GM10248 (cell line): ENCODE measurements at regions of chr11 and their contacts with region 1.

Region 1: GRCh38 chr11:11798586-11799438 is 43.0 kb upstream of the USP47 start:
- DNase-seq: peak; percentile 64
- CTCF ChIP-seq: peak; percentile 87

Region 2: GRCh38 chr11:11813288-11813962 is 14.6 kb after region 1 on chr11:
- CTCF ChIA-PET with region 1: interaction called, 20 read pairs
- POLR2A ChIA-PET with region 1: no interaction called
- DNase-seq: no peak
- CTCF ChIP-seq: no peak

Region 3: GRCh38 chr11:11848891-11849746 is 50.3 kb after region 1 on chr11:
- CTCF ChIA-PET with region 1: interaction called, 14 read pairs
- POLR2A ChIA-PET with region 1: no interaction called
- DNase-seq: peak; percentile 38
- CTCF ChIP-seq: peak; percentile 67

Region 4: DNA sequence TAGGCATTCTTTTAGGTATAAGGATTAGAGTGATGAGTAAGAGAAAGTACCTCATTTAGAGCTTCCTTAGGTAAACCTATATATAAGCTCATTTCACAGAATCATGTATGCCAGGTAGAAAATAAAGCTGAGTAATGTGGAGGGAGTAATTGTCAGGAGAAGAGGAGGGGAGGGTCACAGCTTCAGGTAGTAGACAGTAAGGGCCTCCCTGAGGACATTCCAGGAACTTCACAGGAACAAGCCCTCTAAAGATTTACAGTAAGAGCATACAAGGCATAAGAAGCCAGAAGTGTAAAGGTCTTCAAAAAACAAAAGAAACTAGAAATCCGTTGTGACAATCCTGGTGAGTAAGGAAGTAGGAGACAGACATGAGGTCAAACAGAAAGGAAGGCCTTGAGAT is 100.6 kb after region 1 on chr11:
- CTCF ChIA-PET with region 1: no interaction called
- POLR2A ChIA-PET with region 1: no interaction called
- DNase-seq: no peak
- CTCF ChIP-seq: no peak

Region 5: DNA sequence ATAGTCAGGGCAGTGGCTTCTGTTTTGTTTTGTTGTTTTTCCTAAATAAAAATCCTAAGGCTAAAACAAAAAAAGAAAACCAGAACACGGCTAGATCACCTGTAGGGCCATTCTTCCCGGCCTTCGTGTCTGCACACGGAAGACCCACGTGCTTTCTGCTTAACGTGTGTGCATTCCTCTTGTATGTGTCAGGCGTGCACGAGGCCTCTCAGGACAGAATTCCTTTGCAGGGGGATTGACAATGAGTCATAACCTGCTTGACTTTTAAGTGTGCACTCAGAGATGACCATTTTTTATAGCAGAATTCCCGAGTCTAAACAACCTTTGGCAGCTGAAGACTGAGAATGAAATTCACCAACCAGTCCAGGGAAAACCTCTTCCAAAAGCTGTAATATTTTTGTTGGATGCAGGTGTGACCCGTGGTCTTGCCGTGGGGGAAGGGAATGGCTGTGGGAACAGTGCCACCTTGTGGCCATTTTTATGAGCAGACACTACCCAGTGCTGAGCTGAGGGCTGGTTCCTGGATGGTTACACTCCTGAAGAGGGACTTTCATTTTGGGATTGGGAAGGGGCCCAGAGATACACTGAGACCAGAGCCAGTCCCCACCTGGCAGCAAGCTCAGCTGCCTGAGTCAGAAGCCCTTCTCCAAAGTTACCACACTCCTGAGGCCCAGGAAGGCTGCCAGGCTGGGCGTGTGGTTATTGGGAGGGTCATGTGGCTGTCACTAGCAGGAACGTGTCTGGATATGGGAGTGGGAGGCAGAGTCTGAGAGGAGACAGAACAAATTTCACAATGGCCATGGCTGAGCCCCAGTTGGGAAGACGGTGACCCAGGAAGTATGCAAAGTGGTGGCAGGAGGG is 245.4 kb after region 1 on chr11:
- CTCF ChIA-PET with region 1: interaction called, 34 read pairs
- POLR2A ChIA-PET with region 1: no interaction called
- DNase-seq: peak; percentile 68
- CTCF ChIP-seq: peak; percentile 90

Region 6: GRCh38 chr11:12281571-12282478 is 483.0 kb after region 1 on chr11:
- CTCF ChIA-PET with region 1: interaction called, 12 read pairs
- POLR2A ChIA-PET with region 1: no interaction called
- DNase-seq: peak; percentile 82
- CTCF ChIP-seq: peak; percentile 98